ENCODE measurements at regions of chr11 and their contacts with region 1.

Region 1: GRCh38 chr11:86151174-86152005 is 82.5 kb upstream of the PICALM start:
- DNase-seq: peak; percentile 90
- ATAC-seq: peak; percentile 75
- H3K4me3 ChIP-seq: no peak overlapping the region
- H3K27ac ChIP-seq: peak overlapping the region; percentile 85 to 100
- H3K4me1 ChIP-seq: peaks cover 6 to 13% of the 10 kb centered on the region in 2 donors
- H3K27me3 ChIP-seq: no peaks in the 10 kb centered on the region

Region 2: GRCh38 chr11:86068951-86069407 is 82.4 kb before region 1 on chr11 and contains the start of gene PICALM:
- intact Hi-C with region 1: loop called in 1 of 2 experiments (anchors 2 kb)
- DNase-seq: peak; percentile 99
- ATAC-seq: peak; percentile 98
- H3K4me3 ChIP-seq: peak within 1 kb of the TSS; percentile 93 to 100
- H3K27ac ChIP-seq: peak within 1 kb of the TSS; percentile 97 to 99
- H3K4me1 ChIP-seq: no peaks in the 10 kb centered on the region
- H3K27me3 ChIP-seq: no peaks in the 10 kb centered on the region
- total RNA-seq, gene PICALM: 306 to 486 TPM

Region 3: DNA sequence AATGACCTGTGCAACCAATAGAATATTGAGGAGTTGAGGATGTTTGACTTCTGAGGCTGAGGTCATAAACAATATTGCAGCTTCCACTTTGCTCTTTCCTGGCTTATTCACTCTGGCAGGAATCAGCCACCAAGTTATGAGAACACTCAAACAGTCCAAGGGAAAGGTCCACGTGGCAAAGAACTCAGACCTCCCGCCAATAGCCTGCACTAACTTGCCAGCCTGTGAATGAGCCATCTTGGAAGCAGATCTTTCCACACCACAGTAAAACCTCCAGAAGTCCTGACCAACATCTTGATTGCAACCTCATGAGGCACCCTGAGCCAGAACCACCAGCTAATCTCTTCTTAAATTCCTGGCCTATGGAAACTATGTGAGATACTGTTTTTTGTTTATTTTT is 59.8 kb before region 1 on chr11:
- intact Hi-C with region 1: loop called in 1 of 2 experiments (anchors 1 kb)
- DNase-seq: peak; percentile 66 to 79
- ATAC-seq: peak; percentile 82
- H3K4me3 ChIP-seq: no peak overlapping the region
- H3K27ac ChIP-seq: peak overlapping the region in 1 of 2 donors; percentile 46
- H3K4me1 ChIP-seq: no peaks in the 10 kb centered on the region
- H3K27me3 ChIP-seq: no peaks in the 10 kb centered on the region

Region 4: GRCh38 chr11:86174101-86175046 is 23.0 kb after region 1 on chr11:
- intact Hi-C with region 1: loop called in 1 of 2 experiments (anchors 1 kb)
- DNase-seq: peak; percentile 92 to 93
- ATAC-seq: peak; percentile 94
- H3K4me3 ChIP-seq: no peak overlapping the region
- H3K27ac ChIP-seq: peak overlapping the region; percentile 29 to 84
- H3K4me1 ChIP-seq: peaks cover 0 to 2% of the 10 kb centered on the region in 2 donors
- H3K27me3 ChIP-seq: no peaks in the 10 kb centered on the region